PC-3 (cell line): ENCODE measurements at regions of chr11 and their contacts with region 1.

Region 1: GRCh38 chr11:45371251-45372115 is 85.3 kb upstream of the SYT13 start:
- DNase-seq: peak; percentile 77
- ATAC-seq: peak; percentile 88
- H3K4me3 ChIP-seq: no peak overlapping the region
- H3K27ac ChIP-seq: no peak overlapping the region
- H3K4me1 ChIP-seq: no peaks in the 10 kb centered on the region
- H3K27me3 ChIP-seq: peaks cover 73% of the 10 kb centered on the region
- CTCF ChIP-seq: peak; percentile 90

Region 2: GRCh38 chr11:45655347-45655756 is 283.9 kb after region 1 on chr11:
- CTCF ChIA-PET with region 1: interaction called, 4 read pairs
- POLR2A ChIA-PET with region 1: no interaction called
- intact Hi-C with region 1: loop called (anchors 1 kb)
- DNase-seq: peak; percentile 73
- ATAC-seq: peak; percentile 88
- H3K4me3 ChIP-seq: no peak overlapping the region
- H3K27ac ChIP-seq: no peak overlapping the region
- H3K4me1 ChIP-seq: no peaks in the 10 kb centered on the region
- H3K27me3 ChIP-seq: peaks cover 12% of the 10 kb centered on the region
- CTCF ChIP-seq: peak; percentile 83

Region 3: GRCh38 chr11:45771566-45772448 is 400.3 kb after region 1 on chr11:
- CTCF ChIA-PET with region 1: interaction called, 15 read pairs
- POLR2A ChIA-PET with region 1: no interaction called
- intact Hi-C with region 1: no loop called
- DNase-seq: peak; percentile 78
- ATAC-seq: peak; percentile 95
- H3K4me3 ChIP-seq: peak overlapping the region; percentile 76
- H3K27ac ChIP-seq: no peak overlapping the region
- H3K4me1 ChIP-seq: no peaks in the 10 kb centered on the region
- H3K27me3 ChIP-seq: peaks cover 15% of the 10 kb centered on the region
- CTCF ChIP-seq: peak; percentile 78